Calu3 (cell line): ENCODE measurements at regions of chr6 and their contacts with region 1.

Region 1: GRCh38 chr6:56359201-56359899 is 112.0 kb upstream of the COL21A1 start:
- DNase-seq: peak; percentile 65
- H3K4me3 Mint-ChIP-seq: no peak overlapping the region
- H3K27ac Mint-ChIP-seq: no peak overlapping the region
- H3K4me1 Mint-ChIP-seq: no peaks in the 10 kb centered on the region
- H3K27me3 Mint-ChIP-seq: no peaks in the 10 kb centered on the region
- CTCF ChIP-seq: peak; percentile 65

Region 2: DNA sequence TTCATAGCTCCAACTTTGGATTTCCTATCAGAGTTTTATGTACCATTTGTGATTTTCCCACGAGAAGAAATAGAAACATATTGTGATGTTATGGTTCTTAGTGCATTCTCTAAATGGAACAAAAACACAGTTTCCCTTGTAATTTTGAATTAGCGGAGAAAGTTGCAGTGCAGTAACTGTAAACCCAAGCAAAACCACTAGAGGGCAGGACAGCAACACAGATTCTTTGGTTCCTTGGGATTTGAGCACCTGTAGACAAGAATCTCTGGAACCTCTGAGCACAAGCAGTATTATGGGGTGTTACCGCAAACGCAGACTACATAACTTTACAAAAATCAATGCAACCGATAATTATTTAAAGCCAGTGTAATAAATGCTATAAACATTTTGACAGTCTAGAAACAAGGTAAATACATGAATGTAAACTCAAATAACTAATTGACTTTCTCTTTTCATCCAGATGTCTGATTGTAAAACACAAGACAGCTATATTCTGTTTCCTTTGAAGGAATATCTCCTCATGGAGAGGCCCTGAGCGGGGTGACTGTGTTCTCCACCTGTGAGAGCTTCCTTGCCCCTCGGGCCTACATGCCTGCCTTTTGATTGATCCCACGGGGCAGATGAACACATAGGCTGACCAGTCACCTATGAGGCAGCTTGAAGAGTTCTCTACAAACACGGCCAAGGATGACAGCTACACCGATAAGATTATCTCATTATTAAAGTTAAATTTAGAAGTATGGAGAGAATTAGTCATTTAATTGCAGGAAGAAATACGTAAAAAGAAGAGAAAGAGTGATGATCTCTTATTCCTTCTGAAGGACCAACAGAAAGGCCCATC is 44.4 kb before region 1 on chr6:
- CTCF ChIA-PET with region 1: no interaction called
- intact Hi-C with region 1: loop called (anchors 5 kb)
- DNase-seq: peak; percentile 59
- H3K4me3 Mint-ChIP-seq: no peak overlapping the region
- H3K27ac Mint-ChIP-seq: no peak overlapping the region
- H3K4me1 Mint-ChIP-seq: no peaks in the 10 kb centered on the region
- H3K27me3 Mint-ChIP-seq: peaks cover 16% of the 10 kb centered on the region
- CTCF ChIP-seq: peak; percentile 60

Region 3: DNA sequence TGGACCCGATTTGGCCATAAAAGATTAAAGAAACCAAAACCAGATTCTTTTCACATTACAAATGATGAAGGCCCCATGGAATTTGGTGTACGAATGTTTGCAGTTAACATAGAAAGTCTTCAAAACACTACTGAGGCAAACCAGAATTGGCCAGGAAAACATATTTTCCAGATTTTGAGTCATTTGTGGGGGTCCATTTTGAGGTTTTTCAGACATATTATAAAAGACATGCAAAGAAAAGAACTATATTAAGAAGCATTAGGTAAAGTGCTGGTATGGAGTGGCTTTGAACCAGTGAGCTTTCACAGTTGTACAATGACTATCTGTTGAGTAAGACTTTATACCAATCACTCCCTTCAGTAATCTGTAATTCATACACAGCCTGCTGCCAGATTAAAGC is 56.9 kb after region 1 on chr6:
- CTCF ChIA-PET with region 1: no interaction called
- intact Hi-C with region 1: no loop called
- DNase-seq: no peak
- H3K4me3 Mint-ChIP-seq: no peak overlapping the region
- H3K27ac Mint-ChIP-seq: no peak overlapping the region
- H3K4me1 Mint-ChIP-seq: no peaks in the 10 kb centered on the region
- H3K27me3 Mint-ChIP-seq: no peaks in the 10 kb centered on the region
- CTCF ChIP-seq: no peak

Region 4: DNA sequence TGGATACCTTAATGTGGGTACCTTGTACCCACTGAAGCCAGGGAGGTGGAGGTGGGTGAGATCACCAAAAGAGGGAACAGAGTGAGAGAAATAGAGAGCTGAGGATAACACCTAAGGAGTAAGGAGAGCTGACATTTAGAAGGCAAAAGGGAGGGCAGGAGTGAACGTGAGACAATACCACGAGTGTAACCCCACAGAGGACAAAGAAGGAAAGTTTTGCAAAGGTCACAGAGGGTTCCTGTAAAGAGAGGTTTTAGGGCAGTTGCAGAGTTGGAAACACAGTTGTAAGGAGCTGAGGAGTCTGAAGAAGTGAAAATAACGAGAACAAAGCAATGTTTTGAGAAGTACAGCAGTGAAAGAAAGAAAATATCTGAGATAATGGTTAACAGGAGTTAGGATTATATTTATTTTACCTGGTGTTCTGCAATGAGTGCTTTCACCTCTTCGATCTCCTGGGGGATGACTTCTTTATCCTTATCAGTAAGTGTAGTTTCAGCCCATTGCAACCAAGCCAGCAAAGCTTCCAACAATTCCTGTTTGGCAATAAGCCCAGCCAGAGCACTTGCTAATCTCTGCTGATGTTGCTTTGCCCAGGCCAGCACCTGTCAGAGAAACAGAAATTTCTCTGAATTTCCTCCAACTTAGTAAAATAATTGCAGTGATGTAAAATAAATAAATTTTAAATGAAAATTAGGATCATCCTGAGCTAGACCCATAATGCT is 116.5 kb after region 1 on chr6:
- CTCF ChIA-PET with region 1: no interaction called
- intact Hi-C with region 1: loop called (anchors 5 kb)
- DNase-seq: peak; percentile 50
- H3K4me3 Mint-ChIP-seq: peak overlapping the region; percentile 47
- H3K27ac Mint-ChIP-seq: peak overlapping the region; percentile 60
- H3K4me1 Mint-ChIP-seq: peaks cover 43% of the 10 kb centered on the region
- H3K27me3 Mint-ChIP-seq: no peaks in the 10 kb centered on the region
- CTCF ChIP-seq: no peak

Region 5: GRCh38 chr6:56549014-56549413 is 189.7 kb after region 1 on chr6:
- CTCF ChIA-PET with region 1: no interaction called
- intact Hi-C with region 1: loop called (anchors 5 kb)
- DNase-seq: no peak
- H3K4me3 Mint-ChIP-seq: no peak overlapping the region
- H3K27ac Mint-ChIP-seq: no peak overlapping the region
- H3K4me1 Mint-ChIP-seq: peaks cover 30% of the 10 kb centered on the region
- H3K27me3 Mint-ChIP-seq: no peaks in the 10 kb centered on the region
- CTCF ChIP-seq: no peak

Region 6: GRCh38 chr6:56570413-56571359 is 211.3 kb after region 1 on chr6:
- CTCF ChIA-PET with region 1: no interaction called
- intact Hi-C with region 1: loop called (anchors 1 kb)
- DNase-seq: no peak
- H3K4me3 Mint-ChIP-seq: no peak overlapping the region
- H3K27ac Mint-ChIP-seq: no peak overlapping the region
- H3K4me1 Mint-ChIP-seq: no peaks in the 10 kb centered on the region
- H3K27me3 Mint-ChIP-seq: no peaks in the 10 kb centered on the region
- CTCF ChIP-seq: peak; percentile 50

Region 7: GRCh38 chr6:56593801-56594318 is 234.5 kb after region 1 on chr6:
- CTCF ChIA-PET with region 1: no interaction called
- intact Hi-C with region 1: loop called (anchors 1 kb)
- DNase-seq: no peak
- H3K4me3 Mint-ChIP-seq: no peak overlapping the region
- H3K27ac Mint-ChIP-seq: no peak overlapping the region
- H3K4me1 Mint-ChIP-seq: no peaks in the 10 kb centered on the region
- H3K27me3 Mint-ChIP-seq: no peaks in the 10 kb centered on the region
- CTCF ChIP-seq: no peak